CD14-positive monocyte (primary cell): ENCODE measurements at regions of chr6 and their contacts with region 1.

Region 1: DNA sequence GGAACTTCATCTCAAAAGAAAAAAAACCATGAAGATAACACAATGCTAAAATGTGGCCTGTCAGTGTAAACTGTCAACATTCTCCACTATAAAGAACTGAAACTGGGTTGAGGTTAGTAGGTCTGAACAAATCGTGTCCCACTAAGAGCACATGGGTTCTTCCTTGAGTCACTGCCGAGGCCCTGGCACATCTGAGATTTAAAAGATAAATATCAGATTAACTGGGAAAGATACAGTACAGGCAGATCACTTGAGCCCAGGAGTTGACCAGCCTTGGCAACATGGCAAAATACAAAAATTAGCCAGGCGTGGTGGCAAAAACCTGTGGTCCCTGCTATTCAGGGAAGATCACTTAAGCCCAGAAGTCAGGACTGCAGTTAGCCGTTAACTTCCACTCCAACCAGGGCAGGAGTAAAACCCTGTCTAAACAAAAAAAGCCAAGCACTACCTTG is 5.6 kb downstream of the EEF1A1 start:
- DNase-seq: peak; percentile 33 to 48 (median 39)
- H3K4me3 ChIP-seq: peak overlapping the region in 1 of 3 experiments; percentile 1
- H3K4me3 Mint-ChIP-seq: no peak overlapping the region
- H3K27ac ChIP-seq: peak overlapping the region in 1 of 2 donors; percentile 44
- H3K27ac Mint-ChIP-seq: peak overlapping the region; percentile 68 to 90 (median 86)
- H3K4me1 ChIP-seq: peaks cover 50 to 62% of the 10 kb centered on the region in 2 donors
- H3K4me1 Mint-ChIP-seq: peaks cover 57% of the 10 kb centered on the region
- H3K27me3 ChIP-seq: no peaks in the 10 kb centered on the region
- H3K27me3 Mint-ChIP-seq: peaks cover 0 to 2% (median 0%) of the 10 kb centered on the region in 3 donors
- CTCF ChIP-seq: no peak

Region 2: GRCh38 chr6:73461537-73462350 is 53.5 kb before region 1 on chr6 and contains the start of gene MTO1:
- intact Hi-C with region 1: loop called (anchors 5 to 10 kb)
- DNase-seq: peak; percentile 88 to 92 (median 90)
- H3K4me3 ChIP-seq: peak within 1 kb of the TSS; percentile 70 to 97 (median 97)
- H3K4me3 Mint-ChIP-seq: peak within 1 kb of the TSS; percentile 99 to 100
- H3K27ac ChIP-seq: peak within 1 kb of the TSS; percentile 97 to 100
- H3K27ac Mint-ChIP-seq: peak within 1 kb of the TSS; percentile 97 to 100 (median 99)
- H3K4me1 ChIP-seq: peaks cover 42 to 53% of the 10 kb centered on the region in 2 donors
- H3K4me1 Mint-ChIP-seq: peaks cover 40% of the 10 kb centered on the region
- H3K27me3 ChIP-seq: no peaks in the 10 kb centered on the region
- H3K27me3 Mint-ChIP-seq: peaks cover 0 to 2% (median 0%) of the 10 kb centered on the region in 3 donors
- CTCF ChIP-seq: no peak
- polyA plus RNA-seq, gene MTO1: 8.0 to 22.8 (median 14.4) TPM

Region 3: DNA sequence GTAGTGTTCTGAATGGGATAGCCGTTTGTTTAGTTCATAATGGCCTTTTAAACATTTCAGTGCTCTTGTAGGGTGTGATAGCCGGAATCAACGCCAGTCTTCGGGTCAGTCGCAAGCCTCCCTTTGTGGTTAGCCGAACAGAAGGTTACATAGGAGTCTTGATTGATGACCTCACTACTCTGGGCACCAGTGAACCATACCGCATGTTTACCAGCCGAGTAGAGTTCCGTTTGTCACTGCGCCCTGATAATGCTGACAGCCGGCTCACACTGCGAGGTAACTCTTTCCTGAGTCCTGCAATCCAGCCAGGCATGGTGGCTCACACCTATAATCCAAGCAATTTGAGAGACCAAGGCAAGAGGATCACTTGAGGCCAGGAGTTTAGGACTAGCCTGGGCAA is 33.3 kb before region 1 on chr6:
- intact Hi-C with region 1: no loop called
- DNase-seq: no peak
- H3K4me3 ChIP-seq: no peak overlapping the region
- H3K4me3 Mint-ChIP-seq: no peak overlapping the region
- H3K27ac ChIP-seq: no peak overlapping the region
- H3K27ac Mint-ChIP-seq: peak overlapping the region in 1 of 7 donors; percentile 48
- H3K4me1 ChIP-seq: no peaks in the 10 kb centered on the region
- H3K4me1 Mint-ChIP-seq: no peaks in the 10 kb centered on the region
- H3K27me3 ChIP-seq: no peaks in the 10 kb centered on the region
- H3K27me3 Mint-ChIP-seq: no peaks in the 10 kb centered on the region
- CTCF ChIP-seq: no peak